Psoas muscle (tissue), 8 donors: ENCODE measurements at regions of chr5 and their contacts with region 1.

Region 1: GRCh38 chr5:1344975-1345838 is at the start of gene CLPTM1L:
- DNase-seq: peak; percentile 91 to 94
- ATAC-seq: peak; percentile 97 to 99 (median 98)
- H3K4me3 ChIP-seq: peak within 1 kb of the TSS; percentile 97
- H3K27ac ChIP-seq: peak within 1 kb of the TSS; percentile 88
- H3K4me1 ChIP-seq: peaks cover 18% of the 10 kb centered on the region
- H3K27me3 ChIP-seq: no peaks in the 10 kb centered on the region
- CTCF ChIP-seq: no peak
- total RNA-seq, gene CLPTM1L: 24.9 to 37.2 (median 33.1) TPM

Region 2: DNA sequence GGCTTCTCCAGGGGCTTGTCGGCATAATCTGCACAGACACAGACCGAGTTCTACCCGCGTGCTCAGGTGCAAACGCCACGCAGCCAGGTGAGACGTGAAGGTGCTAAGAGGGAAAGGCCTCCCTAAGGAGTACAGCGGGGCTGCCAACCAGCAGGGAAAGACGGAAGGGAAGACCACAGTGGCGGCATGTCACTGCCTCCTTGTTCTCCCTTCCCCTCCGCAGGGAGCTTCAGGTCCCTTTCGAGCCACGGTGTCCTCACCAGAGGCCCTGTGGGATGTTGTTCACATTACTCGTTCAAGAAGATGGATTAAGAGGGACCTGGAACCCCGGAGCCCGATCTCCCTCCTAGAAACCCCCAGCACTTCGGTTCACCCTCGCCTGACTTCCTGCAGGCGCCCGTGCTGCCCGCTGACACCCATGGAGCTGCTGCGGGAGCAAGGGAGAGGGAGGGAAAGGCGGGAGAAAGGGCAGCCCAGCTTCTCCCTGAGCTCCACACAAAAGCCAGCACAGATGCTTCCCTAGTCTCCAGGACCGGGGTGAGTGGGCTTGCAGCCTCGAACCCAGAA is 453.3 kb before region 1 on chr5:
- intact Hi-C with region 1: no loop called
- DNase-seq: no peak
- ATAC-seq: peak; percentile 29 to 66 (median 41)
- H3K4me3 ChIP-seq: peak overlapping the region; percentile 87
- H3K27ac ChIP-seq: peak overlapping the region; percentile 96
- H3K4me1 ChIP-seq: peaks cover 11% of the 10 kb centered on the region
- H3K27me3 ChIP-seq: no peaks in the 10 kb centered on the region
- CTCF ChIP-seq: no peak

Region 3: DNA sequence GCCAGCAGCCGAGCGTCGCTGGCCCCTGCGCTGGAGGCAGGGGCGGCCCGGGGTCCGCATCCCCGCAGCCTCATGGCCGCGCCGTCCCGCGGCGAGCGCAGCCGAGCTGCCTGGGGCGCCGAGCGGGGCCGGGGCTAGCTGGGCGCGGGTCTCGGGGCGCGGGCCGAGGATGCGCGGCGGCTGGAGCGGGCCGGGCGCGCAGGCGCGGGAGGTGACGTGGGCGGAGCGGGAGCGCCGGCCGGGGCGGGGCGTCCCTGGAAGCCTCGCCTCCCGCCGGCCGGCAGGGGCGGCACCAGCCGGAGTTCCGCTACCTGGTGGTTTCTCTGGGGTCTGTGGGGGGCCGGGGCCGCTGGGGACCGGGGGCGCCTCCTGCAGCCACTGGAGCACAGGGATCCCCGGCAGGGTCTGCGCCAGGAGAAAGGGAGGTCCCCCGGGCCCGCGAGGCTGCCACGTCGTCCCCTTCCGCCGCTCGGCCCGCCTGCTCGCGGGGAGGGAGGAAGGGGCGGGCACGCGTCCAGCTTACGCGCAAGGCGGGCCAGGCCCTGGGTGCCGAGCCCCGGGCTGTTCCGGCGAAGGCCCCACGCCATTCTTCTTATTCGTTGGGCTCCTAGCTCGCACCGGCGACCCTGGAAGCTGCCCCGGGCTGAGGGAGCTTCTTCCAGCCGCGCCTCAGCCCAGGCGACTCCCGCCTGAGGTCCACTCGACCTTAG is 178.7 kb after region 1 on chr5 and contains the start of gene LPCAT1:
- intact Hi-C with region 1: loop called in 1 of 2 experiments (anchors 10 kb)
- DNase-seq: peak; percentile 84 to 89
- ATAC-seq: peak; percentile 88 to 97 (median 94)
- H3K4me3 ChIP-seq: peak within 1 kb of the TSS; percentile 87
- H3K27ac ChIP-seq: peak within 1 kb of the TSS; percentile 85
- H3K4me1 ChIP-seq: no peaks in the 10 kb centered on the region
- H3K27me3 ChIP-seq: peaks cover 0 to 3% (median 0%) of the 10 kb centered on the region in 3 donors
- CTCF ChIP-seq: peak; percentile 28
- total RNA-seq, gene LPCAT1: 4.7 to 6.2 (median 6.1) TPM

Region 4: GRCh38 chr5:1799602-1800471 is 454.6 kb after region 1 on chr5 and contains the start of gene MRPL36:
- intact Hi-C with region 1: loop called in 1 of 2 experiments (anchors 10 kb)
- DNase-seq: peak; percentile 93 to 97
- ATAC-seq: peak; percentile 91 to 94 (median 93)
- H3K4me3 ChIP-seq: peak within 1 kb of the TSS; percentile 98
- H3K27ac ChIP-seq: peak within 1 kb of the TSS; percentile 94
- H3K4me1 ChIP-seq: peaks cover 31% of the 10 kb centered on the region
- H3K27me3 ChIP-seq: no peaks in the 10 kb centered on the region
- CTCF ChIP-seq: no peak
- total RNA-seq, gene MRPL36: 61.6 to 111 (median 87.0) TPM